Mammary epithelial cell (primary cell): ENCODE measurements at regions of chr22 and their contacts with region 1.

Region 1: DNA sequence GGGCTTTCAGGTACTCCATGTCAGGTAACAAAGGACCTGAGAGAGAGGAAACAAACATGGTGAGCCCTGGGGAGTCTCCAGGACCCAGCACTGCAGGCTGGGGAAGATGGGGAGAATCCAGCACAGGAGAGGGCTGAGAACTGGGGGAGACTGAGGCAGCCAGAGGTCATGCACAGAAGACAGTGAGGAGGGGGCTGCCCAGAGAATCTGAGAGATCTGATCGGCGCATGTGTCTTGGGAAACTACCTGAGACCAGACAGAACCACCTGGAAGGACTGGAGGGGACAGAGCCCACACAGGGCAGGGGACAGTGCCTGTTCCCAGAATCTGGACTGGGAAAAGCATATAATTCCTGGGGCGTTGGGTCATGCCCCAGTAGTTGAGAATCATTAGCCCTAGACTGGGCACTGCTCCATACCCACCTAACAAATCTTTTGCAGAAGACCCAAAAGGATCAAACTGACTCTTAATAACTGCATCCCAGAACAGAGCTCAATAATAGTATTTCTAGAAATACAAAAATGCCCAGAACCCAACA is 20.0 kb upstream of the COMT start:
- DNase-seq: no peak
- H3K4me3 ChIP-seq: no peak overlapping the region
- H3K27ac ChIP-seq: no peak overlapping the region
- H3K4me1 ChIP-seq: no peaks in the 10 kb centered on the region
- H3K27me3 ChIP-seq: no peaks in the 10 kb centered on the region
- CTCF ChIP-seq: no peak

Region 2: GRCh38 chr22:19479357-19480172 is 442.0 kb before region 1 on chr22 and contains the start of gene CDC45:
- CTCF ChIA-PET with region 1: no interaction called
- dilution Hi-C with region 1: no loop called
- in situ Hi-C with region 1: no loop called
- intact Hi-C with region 1: no loop called
- DNase-seq: peak; percentile 98
- H3K4me3 ChIP-seq: peak within 1 kb of the TSS; percentile 40 to 93 (median 91)
- H3K27ac ChIP-seq: peak within 1 kb of the TSS; percentile 100
- H3K4me1 ChIP-seq: peaks cover 30% of the 10 kb centered on the region
- H3K27me3 ChIP-seq: no peaks in the 10 kb centered on the region
- CTCF ChIP-seq: no peak
- total RNA-seq, gene CDC45: 2.2 to 31.1 TPM

Region 3: DNA sequence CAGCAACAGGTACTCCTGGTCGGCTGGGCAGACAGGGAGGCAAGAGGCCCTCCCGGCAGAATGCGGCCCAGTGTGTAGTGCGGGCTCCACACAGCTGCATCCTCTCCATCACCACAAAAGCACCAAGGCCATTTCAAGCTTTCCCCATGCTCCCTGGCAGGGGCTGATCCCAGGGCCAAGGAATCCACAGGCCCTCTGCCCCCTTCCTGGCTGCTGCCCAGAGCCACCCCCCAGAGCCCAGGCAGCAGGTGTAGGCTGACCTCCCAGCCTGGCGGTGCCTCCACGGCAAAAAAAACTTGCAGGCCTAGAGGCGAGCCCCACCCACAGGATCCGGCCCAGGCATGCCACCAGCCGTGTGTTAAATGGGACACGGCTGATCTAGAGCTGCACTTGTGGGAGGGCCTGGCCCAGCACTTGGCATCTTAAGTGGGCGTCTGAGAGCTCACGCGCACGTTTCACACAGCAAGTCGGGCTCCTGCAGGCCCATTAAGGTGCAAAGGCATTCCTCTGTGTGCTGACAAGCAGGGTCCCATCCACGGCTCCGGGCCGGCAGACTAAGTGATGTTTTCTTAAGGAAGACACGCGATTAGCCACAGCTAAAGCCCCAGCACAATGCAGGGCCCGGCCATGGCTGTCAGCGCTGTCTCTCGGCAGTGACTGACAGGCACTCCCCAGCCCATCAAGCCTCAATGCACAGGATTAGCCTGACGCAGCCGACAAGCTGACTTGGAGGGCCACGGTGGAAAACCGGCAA is 47.1 kb before region 1 on chr22:
- CTCF ChIA-PET with region 1: no interaction called
- dilution Hi-C with region 1: loop called (anchors 5 kb)
- in situ Hi-C with region 1: no loop called
- intact Hi-C with region 1: no loop called
- DNase-seq: peak; percentile 48
- H3K4me3 ChIP-seq: no peak overlapping the region
- H3K27ac ChIP-seq: no peak overlapping the region
- H3K4me1 ChIP-seq: peaks cover 36% of the 10 kb centered on the region
- H3K27me3 ChIP-seq: no peaks in the 10 kb centered on the region
- CTCF ChIP-seq: peak in 1 of 2 donors; percentile 17

Region 4: DNA sequence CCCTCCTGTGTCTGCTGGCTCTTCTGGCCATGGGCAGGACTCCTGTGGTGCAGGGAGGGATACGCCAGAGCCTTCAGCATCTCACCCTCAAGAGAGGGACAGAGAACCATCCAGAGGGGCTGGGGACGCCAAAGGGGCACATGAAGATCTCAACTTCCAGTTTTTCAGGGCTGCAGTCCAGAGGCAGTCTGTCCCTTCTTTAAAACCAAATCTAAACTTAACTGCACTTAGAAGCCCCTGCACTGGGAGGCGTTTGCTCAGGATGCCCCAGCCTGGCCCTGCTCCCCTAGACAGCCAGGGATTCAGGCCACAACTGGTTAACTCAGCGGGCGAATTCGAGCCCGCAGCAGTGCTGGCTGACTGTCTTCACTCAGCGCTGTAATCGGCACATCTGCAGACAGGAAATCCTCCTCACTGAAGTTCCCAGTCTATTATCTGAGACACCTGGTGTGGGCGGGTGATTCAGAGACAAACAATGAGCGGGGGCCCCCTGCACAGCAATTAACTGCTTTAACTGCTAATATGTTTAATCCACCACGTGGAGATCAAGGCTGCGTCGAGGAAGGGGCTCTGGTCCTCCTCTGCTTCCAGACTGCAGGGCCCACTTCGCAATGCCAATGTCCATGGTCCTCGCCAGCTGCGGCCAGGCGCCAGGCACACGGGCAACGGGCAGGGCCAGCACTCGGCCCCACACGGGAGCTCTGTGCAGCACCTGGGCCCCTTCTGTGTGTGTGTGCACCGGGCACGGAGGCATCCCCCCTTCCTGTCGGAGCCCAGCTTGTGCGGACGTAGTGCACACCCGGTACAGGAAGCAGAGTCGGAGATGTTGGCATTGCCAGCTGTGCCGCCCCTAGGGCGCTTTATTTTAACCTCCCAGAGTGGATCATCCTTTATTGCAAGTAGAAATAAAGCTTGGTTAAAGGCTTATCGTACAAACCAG is 30.0 kb before region 1 on chr22:
- CTCF ChIA-PET with region 1: no interaction called
- dilution Hi-C with region 1: no loop called
- in situ Hi-C with region 1: no loop called
- intact Hi-C with region 1: no loop called
- DNase-seq: peak; percentile 85
- H3K4me3 ChIP-seq: peak overlapping the region in 1 of 3 experiments; percentile 23
- H3K27ac ChIP-seq: peak overlapping the region; percentile 18
- H3K4me1 ChIP-seq: peaks cover 51% of the 10 kb centered on the region
- H3K27me3 ChIP-seq: no peaks in the 10 kb centered on the region
- CTCF ChIP-seq: no peak